Sigmoid colon (tissue), 7 donors: ENCODE measurements at regions of chr14 and their contacts with region 1.

Region 1: DNA sequence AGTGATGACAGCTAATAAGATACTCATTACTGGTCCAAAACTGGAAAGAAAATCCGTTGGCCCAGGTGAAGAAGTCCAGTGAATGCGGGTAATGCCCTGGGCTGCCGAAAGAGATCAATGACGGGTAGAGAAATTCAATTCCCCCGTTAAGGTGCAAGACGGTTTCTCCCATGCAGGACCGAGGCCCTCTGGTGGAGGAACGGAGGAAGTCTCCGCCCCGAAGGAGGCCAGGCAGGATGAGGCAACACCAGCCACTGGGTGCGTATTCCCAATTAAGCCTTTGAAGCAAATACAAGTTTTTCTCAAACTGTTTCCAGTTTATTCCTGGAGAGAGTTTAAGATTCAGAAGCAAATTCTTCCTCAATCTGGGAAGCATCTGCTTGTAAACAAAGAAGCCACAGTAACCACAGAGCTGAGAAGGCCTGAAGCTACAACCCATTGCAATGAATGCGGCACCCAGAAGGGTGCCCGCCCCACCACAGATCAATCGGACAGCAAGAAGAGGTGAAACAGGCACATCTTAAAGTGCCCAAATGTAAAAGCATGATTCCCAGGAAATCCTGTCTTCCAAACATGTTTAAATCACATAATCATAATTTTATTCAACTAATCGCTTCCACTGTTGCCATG is 118.5 kb downstream of the TTC7B start:
- DNase-seq: peak; percentile 95
- H3K4me3 ChIP-seq: no peak overlapping the region
- H3K27ac ChIP-seq: peak overlapping the region; percentile 76 to 86 (median 82)
- H3K4me1 ChIP-seq: peaks cover 0 to 39% (median 34%) of the 10 kb centered on the region in 4 donors
- H3K27me3 ChIP-seq: no peaks in the 10 kb centered on the region
- CTCF ChIP-seq: peak; percentile 86 to 97 (median 96)
- EP300 ChIP-seq: no peak
- POLR2A ChIP-seq: no peak

Region 2: GRCh38 chr14:90518941-90519256 is 178.8 kb before region 1 on chr14:
- intact Hi-C with region 1: loop called (anchors 2 kb)
- DNase-seq: no peak
- H3K4me3 ChIP-seq: no peak overlapping the region
- H3K27ac ChIP-seq: peak overlapping the region; percentile 70 to 90 (median 80)
- H3K4me1 ChIP-seq: peaks cover 0 to 74% (median 63%) of the 10 kb centered on the region in 4 donors
- H3K27me3 ChIP-seq: no peaks in the 10 kb centered on the region
- CTCF ChIP-seq: peak in 3 of 4 experiments; percentile 14 to 43 (median 30)
- EP300 ChIP-seq: no peak
- POLR2A ChIP-seq: no peak

Region 3: GRCh38 chr14:90554341-90554740 is 143.4 kb before region 1 on chr14:
- intact Hi-C with region 1: loop called (anchors 2 kb)
- DNase-seq: peak; percentile 79
- H3K4me3 ChIP-seq: no peak overlapping the region
- H3K27ac ChIP-seq: peak overlapping the region; percentile 73 to 89 (median 84)
- H3K4me1 ChIP-seq: peaks cover 0 to 79% (median 73%) of the 10 kb centered on the region in 4 donors
- H3K27me3 ChIP-seq: no peaks in the 10 kb centered on the region
- CTCF ChIP-seq: no peak
- EP300 ChIP-seq: no peak
- POLR2A ChIP-seq: no peak

Region 4: GRCh38 chr14:90587918-90588317 is 109.8 kb before region 1 on chr14:
- intact Hi-C with region 1: no loop called
- DNase-seq: no peak
- H3K4me3 ChIP-seq: no peak overlapping the region
- H3K27ac ChIP-seq: no peak overlapping the region
- H3K4me1 ChIP-seq: no peaks in the 10 kb centered on the region
- H3K27me3 ChIP-seq: no peaks in the 10 kb centered on the region
- CTCF ChIP-seq: no peak
- EP300 ChIP-seq: no peak
- POLR2A ChIP-seq: no peak

Region 5: GRCh38 chr14:90624728-90625400 is 72.8 kb before region 1 on chr14:
- intact Hi-C with region 1: loop called (anchors 2 kb)
- DNase-seq: no peak
- H3K4me3 ChIP-seq: no peak overlapping the region
- H3K27ac ChIP-seq: peak overlapping the region; percentile 71 to 84 (median 76)
- H3K4me1 ChIP-seq: peaks cover 0 to 58% (median 52%) of the 10 kb centered on the region in 4 donors
- H3K27me3 ChIP-seq: no peaks in the 10 kb centered on the region
- CTCF ChIP-seq: no peak
- EP300 ChIP-seq: no peak
- POLR2A ChIP-seq: no peak

Region 6: GRCh38 chr14:90645842-90646443 is 51.7 kb before region 1 on chr14:
- intact Hi-C with region 1: loop called (anchors 2 kb)
- DNase-seq: no peak
- H3K4me3 ChIP-seq: no peak overlapping the region
- H3K27ac ChIP-seq: peak overlapping the region; percentile 75 to 86 (median 81)
- H3K4me1 ChIP-seq: peaks cover 0 to 66% (median 57%) of the 10 kb centered on the region in 4 donors
- H3K27me3 ChIP-seq: no peaks in the 10 kb centered on the region
- CTCF ChIP-seq: no peak
- EP300 ChIP-seq: no peak
- POLR2A ChIP-seq: no peak

Region 7: GRCh38 chr14:90758028-90758889 is 60.6 kb after region 1 on chr14:
- intact Hi-C with region 1: loop called (anchors 2 kb)
- DNase-seq: peak; percentile 95
- H3K4me3 ChIP-seq: peak overlapping the region; percentile 26 to 50 (median 46)
- H3K27ac ChIP-seq: peak overlapping the region; percentile 90 to 96 (median 92)
- H3K4me1 ChIP-seq: peaks cover 0 to 52% (median 36%) of the 10 kb centered on the region in 4 donors
- H3K27me3 ChIP-seq: no peaks in the 10 kb centered on the region
- CTCF ChIP-seq: peak; percentile 75 to 91 (median 85)
- EP300 ChIP-seq: no peak
- POLR2A ChIP-seq: peak in 1 of 2 donors; percentile 35